ENCODE measurements at regions of chr18 and their contacts with region 1.

Region 1: DNA sequence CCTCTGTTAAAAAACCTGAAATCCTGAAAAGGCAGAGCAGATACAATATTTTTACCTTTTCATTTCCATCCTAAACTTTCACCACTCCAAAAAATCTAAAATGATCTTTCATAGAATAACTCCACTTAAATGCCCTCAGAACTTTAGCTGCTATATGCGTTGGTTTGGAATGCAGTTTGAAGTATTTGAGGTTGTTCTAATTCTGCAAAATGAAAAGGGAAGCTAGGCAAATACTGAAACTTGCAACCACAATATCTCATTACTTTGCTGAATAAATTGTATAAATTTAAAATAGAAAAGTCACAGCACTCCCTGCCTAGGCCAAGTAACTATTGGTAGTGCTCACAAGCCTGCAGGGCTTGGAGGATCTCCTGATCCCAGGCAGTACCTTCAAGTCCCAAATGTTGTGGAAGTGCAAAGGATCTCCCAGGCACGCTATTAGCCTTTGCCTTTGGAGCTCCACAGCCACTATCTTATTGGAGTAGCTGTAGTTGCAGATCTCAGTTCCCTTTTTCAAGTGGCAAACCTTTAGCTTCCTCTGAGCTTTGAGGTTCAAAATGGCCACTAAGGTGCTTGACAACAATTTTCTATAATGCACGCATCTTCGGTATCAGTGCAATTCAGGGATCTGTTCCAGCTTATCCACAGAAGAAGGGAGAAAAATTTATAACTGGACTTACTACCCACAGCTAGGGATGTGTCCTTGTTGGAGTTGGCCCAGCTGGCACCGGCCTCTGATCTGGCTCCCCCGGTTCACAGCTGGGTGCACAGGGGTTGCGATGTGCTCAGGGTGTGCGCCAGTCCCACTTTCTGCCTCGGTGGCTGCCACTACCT is 43.4 kb upstream of the ANKRD62 start:
- DNase-seq: no peak
- ATAC-seq: no peak
- H3K4me3 ChIP-seq: no peak overlapping the region
- H3K27ac ChIP-seq: no peak overlapping the region
- H3K4me1 ChIP-seq: no peaks in the 10 kb centered on the region
- H3K27me3 ChIP-seq: peaks cover 0 to 2% (median 0%) of the 10 kb centered on the region in 3 donors
- CTCF ChIP-seq: no peak
- POLR2A ChIP-seq: no peak

Region 2: GRCh38 chr18:11937874-11938478 is 112.2 kb before region 1 on chr18:
- in situ Hi-C with region 1: loop called in 1 of 4 experiments (anchors 10 kb)
- intact Hi-C with region 1: no loop called
- DNase-seq: peak; percentile 45 to 67
- ATAC-seq: peak; percentile 87
- H3K4me3 ChIP-seq: no peak overlapping the region
- H3K27ac ChIP-seq: peak overlapping the region in 3 of 4 donors; percentile 41 to 44 (median 44)
- H3K4me1 ChIP-seq: peaks cover 0 to 2% of the 10 kb centered on the region in 2 donors
- H3K27me3 ChIP-seq: no peaks in the 10 kb centered on the region
- CTCF ChIP-seq: peak; percentile 80 to 90 (median 85)
- POLR2A ChIP-seq: no peak

Region 3: DNA sequence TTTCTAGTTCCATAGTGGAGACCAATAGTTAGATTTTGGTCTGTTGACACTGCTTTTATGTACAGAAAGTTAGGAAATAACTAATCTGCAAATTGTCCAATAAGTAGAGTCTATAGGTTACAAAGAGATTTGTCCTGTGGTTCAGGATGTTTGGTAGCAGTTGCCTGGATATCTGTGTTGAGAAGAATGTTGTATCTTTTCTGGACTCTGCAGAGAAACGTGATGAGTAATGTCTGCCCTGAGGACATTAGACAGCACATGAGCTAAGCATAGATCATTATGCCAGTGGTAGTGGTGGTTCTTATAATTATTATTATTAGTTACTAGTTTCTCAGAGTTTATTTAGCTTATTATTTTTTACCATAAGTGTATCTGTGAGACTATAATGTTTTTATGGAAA is 109.3 kb after region 1 on chr18:
- in situ Hi-C with region 1: loop called in 1 of 4 experiments (anchors 25 kb)
- intact Hi-C with region 1: no loop called
- DNase-seq: no peak
- ATAC-seq: no peak
- H3K4me3 ChIP-seq: no peak overlapping the region
- H3K27ac ChIP-seq: no peak overlapping the region
- H3K4me1 ChIP-seq: no peaks in the 10 kb centered on the region
- H3K27me3 ChIP-seq: no peaks in the 10 kb centered on the region
- CTCF ChIP-seq: no peak
- POLR2A ChIP-seq: no peak